ENCODE measurements at regions of chr4 and their contacts with region 1.

Region 1: DNA sequence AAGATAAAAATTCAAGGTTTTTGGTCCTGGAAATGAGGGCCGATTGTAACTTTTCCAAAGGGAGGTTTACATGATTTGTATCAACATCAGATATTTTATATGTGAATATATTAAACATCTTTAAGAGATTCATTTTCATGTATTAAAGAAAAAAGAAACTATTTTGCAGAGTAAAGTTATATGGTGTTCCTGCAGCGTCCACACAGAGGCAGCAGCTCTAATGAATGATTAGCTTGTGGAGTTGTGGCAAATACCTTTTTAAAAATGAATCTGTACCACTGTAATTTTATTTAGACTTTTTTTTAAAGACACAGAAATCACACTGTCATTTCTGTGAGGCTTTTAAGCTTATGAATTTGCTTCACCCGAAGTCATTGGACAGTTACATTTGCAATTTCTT is 25.6 kb upstream of the FHDC1 start:
- DNase-seq: no peak
- H3K4me3 Mint-ChIP-seq: no peak overlapping the region
- H3K27ac Mint-ChIP-seq: no peak overlapping the region
- H3K4me1 Mint-ChIP-seq: peaks cover 11% of the 10 kb centered on the region
- H3K27me3 Mint-ChIP-seq: no peaks in the 10 kb centered on the region
- CTCF ChIP-seq: no peak

Region 2: DNA sequence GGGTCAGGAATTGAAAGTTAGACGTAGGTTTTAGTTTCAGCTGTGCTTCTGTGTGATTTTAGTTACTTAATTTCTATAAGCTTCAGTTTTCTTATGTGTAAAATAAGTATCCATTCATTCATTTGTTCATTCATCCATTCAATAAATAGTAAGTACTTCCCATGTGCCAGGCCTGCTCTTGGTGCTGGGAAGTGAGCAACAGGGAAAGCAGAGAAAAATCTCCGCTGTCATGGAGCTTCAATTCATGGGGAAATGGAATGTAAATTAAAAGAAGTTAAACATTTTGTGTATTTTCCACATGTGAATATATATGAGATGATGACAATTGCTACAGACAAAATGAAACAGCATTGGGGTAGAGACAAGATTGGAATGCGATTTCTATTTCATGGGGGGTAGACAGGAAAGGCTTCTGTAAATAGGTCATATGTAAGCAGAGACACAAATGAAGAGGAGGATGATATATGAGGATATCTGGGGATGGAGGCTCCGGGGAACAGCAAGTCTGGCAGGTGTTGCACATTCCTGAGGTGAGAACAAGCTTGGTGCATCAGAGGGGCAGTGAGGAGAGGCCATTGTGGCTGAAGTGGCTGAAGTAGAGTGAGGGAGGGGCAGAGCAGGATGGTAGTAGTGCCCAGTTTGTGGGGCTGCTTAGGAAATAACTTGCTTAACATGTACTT is 1435.3 kb before region 1 on chr4:
- CTCF ChIA-PET with region 1: no interaction called
- intact Hi-C with region 1: loop called (anchors 10 kb)
- DNase-seq: no peak
- H3K4me3 Mint-ChIP-seq: no peak overlapping the region
- H3K27ac Mint-ChIP-seq: no peak overlapping the region
- H3K4me1 Mint-ChIP-seq: peaks cover 9% of the 10 kb centered on the region
- H3K27me3 Mint-ChIP-seq: no peaks in the 10 kb centered on the region
- CTCF ChIP-seq: no peak

Region 3: GRCh38 chr4:153110739-153111138 is 200.2 kb after region 1 on chr4:
- CTCF ChIA-PET with region 1: no interaction called
- intact Hi-C with region 1: no loop called
- DNase-seq: no peak
- H3K4me3 Mint-ChIP-seq: no peak overlapping the region
- H3K27ac Mint-ChIP-seq: no peak overlapping the region
- H3K4me1 Mint-ChIP-seq: peaks cover 11% of the 10 kb centered on the region
- H3K27me3 Mint-ChIP-seq: no peaks in the 10 kb centered on the region
- CTCF ChIP-seq: no peak

Measured in Calu3 (cell line).